Thyroid gland (tissue), 4 donors: ENCODE measurements at regions of chr3 and their contacts with region 1.

Region 1: GRCh38 chr3:185572183-185572582 is 13.9 kb upstream of the SENP2 start:
- DNase-seq: no peak
- H3K4me3 ChIP-seq: no peak overlapping the region
- H3K27ac ChIP-seq: no peak overlapping the region
- H3K4me1 ChIP-seq: peaks cover 0 to 3% of the 10 kb centered on the region in 2 donors
- H3K27me3 ChIP-seq: no peaks in the 10 kb centered on the region
- CTCF ChIP-seq: no peak
- POLR2A ChIP-seq: no peak

Region 2: GRCh38 chr3:185356499-185356898 is 215.7 kb before region 1 on chr3:
- intact Hi-C with region 1: loop called (anchors 5 kb)
- DNase-seq: no peak
- H3K4me3 ChIP-seq: no peak overlapping the region
- H3K27ac ChIP-seq: no peak overlapping the region
- H3K4me1 ChIP-seq: no peaks in the 10 kb centered on the region
- H3K27me3 ChIP-seq: no peaks in the 10 kb centered on the region
- CTCF ChIP-seq: no peak
- POLR2A ChIP-seq: no peak

Region 3: DNA sequence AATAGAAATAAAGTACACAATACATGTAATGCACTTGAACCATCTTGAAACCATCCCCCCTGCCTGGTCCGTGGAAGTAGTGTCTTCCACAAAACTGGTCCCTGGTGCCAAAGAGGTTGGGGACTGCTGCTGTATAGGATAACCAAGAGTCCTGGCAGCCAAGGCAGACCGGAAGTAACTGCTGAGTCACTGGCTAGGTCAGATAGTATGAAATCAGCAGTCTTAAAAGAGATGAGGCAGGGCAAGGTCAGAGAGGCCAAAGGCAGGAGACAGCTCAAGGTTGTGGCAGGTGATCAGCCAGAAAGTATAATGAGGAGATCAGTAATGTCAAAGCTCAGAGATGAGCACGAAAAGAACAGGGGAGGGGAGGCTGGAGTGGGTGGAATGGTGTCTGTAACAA is 149.0 kb before region 1 on chr3:
- intact Hi-C with region 1: no loop called
- DNase-seq: no peak
- H3K4me3 ChIP-seq: no peak overlapping the region
- H3K27ac ChIP-seq: no peak overlapping the region
- H3K4me1 ChIP-seq: peaks cover 0 to 3% of the 10 kb centered on the region in 2 donors
- H3K27me3 ChIP-seq: no peaks in the 10 kb centered on the region
- CTCF ChIP-seq: no peak
- POLR2A ChIP-seq: no peak

Region 4: GRCh38 chr3:185537369-185537970 is 34.7 kb before region 1 on chr3:
- intact Hi-C with region 1: no loop called
- DNase-seq: peak; percentile 7 to 17
- H3K4me3 ChIP-seq: no peak overlapping the region
- H3K27ac ChIP-seq: no peak overlapping the region
- H3K4me1 ChIP-seq: no peaks in the 10 kb centered on the region
- H3K27me3 ChIP-seq: no peaks in the 10 kb centered on the region
- CTCF ChIP-seq: no peak
- POLR2A ChIP-seq: no peak